ENCODE measurements at regions of chr6 and their contacts with region 1.

Region 1: GRCh38 chr6:31958741-31959739 is at the starts of genes NELFE and SKIC2:
- DNase-seq: peak; percentile 97 to 98
- H3K4me3 ChIP-seq: peak within 1 kb of the TSS; percentile 78 to 94 (median 83)
- H3K27ac ChIP-seq: peak within 1 kb of the TSS; percentile 87 to 94
- H3K4me1 ChIP-seq: peaks cover 0 to 7% of the 10 kb centered on the region in 2 donors
- H3K27me3 ChIP-seq: no peaks in the 10 kb centered on the region
- CTCF ChIP-seq: peak in 1 of 3 donors; percentile 4
- POLR2A ChIP-seq: peak; percentile 56
- total RNA-seq, gene NELFE: 77.3 to 92.7 (median 90.1) TPM
- total RNA-seq, gene SKIC2: 30.7 to 46.5 (median 43.9) TPM

Region 2: DNA sequence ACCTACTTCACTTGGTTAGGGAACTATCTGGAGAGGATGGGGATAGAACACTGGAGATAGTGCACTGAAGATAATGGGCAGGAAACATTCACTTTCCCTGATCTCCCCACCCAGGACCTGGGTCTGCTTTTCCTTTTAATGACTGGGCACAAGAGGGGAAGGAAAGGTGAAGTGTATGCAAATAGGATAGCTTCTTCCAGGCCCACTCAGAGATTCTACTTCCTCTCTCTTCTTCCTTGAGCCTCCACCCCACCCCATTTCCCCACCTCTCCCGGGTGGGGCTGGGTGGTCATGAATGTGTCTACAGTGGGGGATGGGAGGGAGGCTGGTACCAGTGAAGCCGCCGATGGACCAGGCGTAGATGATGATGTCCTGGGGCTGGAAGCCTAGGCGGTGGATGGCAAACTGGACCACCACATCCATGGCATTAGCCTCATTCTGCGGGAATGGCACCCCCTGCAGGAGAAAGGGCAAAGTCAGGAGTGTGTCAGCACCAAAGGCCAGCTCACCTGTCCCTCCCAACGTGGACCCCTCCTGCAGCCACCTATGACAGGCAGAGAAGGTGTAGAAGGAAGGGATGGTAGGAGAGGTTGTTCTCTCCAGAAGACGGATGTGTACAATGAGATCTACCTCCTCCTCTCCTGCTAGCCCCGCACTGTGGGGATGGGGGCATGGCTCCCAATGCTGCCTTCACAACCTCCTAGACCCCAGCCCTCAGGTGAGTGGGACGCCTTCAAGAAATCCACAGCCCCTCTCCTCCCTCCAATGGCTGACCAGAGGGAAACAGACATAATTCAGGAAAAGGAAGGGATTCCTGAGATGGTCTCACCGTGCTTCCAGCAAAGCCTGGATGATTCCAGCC is 269.6 kb before region 1 on chr6:
- intact Hi-C with region 1: loop called (anchors 10 kb)
- DNase-seq: no peak
- H3K4me3 ChIP-seq: no peak overlapping the region
- H3K27ac ChIP-seq: no peak overlapping the region
- H3K4me1 ChIP-seq: no peaks in the 10 kb centered on the region
- H3K27me3 ChIP-seq: no peaks in the 10 kb centered on the region
- CTCF ChIP-seq: no peak
- POLR2A ChIP-seq: no peak

Region 3: DNA sequence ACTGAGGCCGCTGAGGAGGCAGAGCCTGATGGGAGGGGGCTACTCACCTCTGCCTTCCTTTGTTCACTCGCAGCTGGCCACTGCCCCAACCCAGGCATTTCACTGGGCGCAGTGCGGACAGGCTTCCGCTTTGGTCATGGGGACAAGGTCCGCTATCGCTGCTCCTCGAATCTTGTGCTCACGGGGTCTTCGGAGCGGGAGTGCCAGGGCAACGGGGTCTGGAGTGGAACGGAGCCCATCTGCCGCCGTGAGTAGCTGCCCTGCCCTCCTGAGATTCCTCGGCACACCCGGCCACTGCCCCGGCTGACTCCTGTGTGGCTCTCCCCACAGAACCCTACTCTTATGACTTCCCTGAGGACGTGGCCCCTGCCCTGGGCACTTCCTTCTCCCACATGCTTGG is 25.5 kb before region 1 on chr6:
- intact Hi-C with region 1: no loop called
- DNase-seq: no peak
- H3K4me3 ChIP-seq: no peak overlapping the region
- H3K27ac ChIP-seq: no peak overlapping the region
- H3K4me1 ChIP-seq: no peaks in the 10 kb centered on the region
- H3K27me3 ChIP-seq: no peaks in the 10 kb centered on the region
- CTCF ChIP-seq: no peak
- POLR2A ChIP-seq: no peak

Measured in breast epithelium (tissue), 4 donors.